ENCODE measurements at regions of chr12 and their contacts with region 1.

Region 1: GRCh38 chr12:95325501-95325900 is 107.9 kb downstream of the VEZT start:
- DNase-seq: no peak
- H3K4me3 ChIP-seq: no peak overlapping the region
- H3K27ac ChIP-seq: no peak overlapping the region
- H3K4me1 ChIP-seq: peaks cover 14% of the 10 kb centered on the region
- H3K27me3 ChIP-seq: no peaks in the 10 kb centered on the region
- CTCF ChIP-seq: no peak

Region 2: DNA sequence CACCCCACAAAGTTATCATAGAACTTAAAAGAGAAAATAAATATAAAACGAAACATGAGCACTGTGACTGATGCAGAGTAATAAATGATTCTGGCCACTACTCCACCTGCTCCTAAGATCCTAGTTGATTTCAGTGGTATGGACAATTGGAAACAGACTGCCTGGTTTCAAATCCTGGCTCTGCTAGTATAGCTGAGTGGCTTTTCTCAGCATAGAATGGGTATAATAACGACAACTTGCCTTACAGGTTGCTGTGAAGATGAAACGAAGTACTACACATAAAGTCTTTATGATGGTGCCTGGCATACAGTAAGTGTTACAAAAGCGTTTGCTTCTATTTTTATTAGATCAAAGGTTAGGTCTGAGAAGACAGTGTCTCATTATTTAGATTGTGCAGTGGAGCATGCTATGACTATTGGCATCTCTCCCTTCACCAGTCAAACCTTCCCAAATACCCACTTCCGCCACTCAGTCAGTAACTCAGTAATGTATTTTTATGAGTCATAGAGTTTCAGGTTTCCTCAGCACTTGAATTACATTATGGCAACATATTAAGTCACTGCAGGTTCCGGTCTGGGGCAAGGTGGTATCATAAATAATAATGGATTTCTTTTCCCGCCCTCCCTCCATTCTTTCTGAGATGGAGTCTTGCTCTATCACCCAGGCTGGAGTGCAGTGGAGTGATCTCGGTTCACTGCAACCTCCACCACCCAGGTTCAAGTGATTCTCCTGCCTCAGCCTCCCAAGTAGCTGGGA is 222.4 kb before region 1 on chr12:
- CTCF ChIA-PET with region 1: no interaction called
- POLR2A ChIA-PET with region 1: no interaction called
- intact Hi-C with region 1: no loop called
- DNase-seq: peak; percentile 87
- H3K4me3 ChIP-seq: no peak overlapping the region
- H3K27ac ChIP-seq: no peak overlapping the region
- H3K4me1 ChIP-seq: peaks cover 14% of the 10 kb centered on the region
- H3K27me3 ChIP-seq: no peaks in the 10 kb centered on the region
- CTCF ChIP-seq: no peak

Region 3: DNA sequence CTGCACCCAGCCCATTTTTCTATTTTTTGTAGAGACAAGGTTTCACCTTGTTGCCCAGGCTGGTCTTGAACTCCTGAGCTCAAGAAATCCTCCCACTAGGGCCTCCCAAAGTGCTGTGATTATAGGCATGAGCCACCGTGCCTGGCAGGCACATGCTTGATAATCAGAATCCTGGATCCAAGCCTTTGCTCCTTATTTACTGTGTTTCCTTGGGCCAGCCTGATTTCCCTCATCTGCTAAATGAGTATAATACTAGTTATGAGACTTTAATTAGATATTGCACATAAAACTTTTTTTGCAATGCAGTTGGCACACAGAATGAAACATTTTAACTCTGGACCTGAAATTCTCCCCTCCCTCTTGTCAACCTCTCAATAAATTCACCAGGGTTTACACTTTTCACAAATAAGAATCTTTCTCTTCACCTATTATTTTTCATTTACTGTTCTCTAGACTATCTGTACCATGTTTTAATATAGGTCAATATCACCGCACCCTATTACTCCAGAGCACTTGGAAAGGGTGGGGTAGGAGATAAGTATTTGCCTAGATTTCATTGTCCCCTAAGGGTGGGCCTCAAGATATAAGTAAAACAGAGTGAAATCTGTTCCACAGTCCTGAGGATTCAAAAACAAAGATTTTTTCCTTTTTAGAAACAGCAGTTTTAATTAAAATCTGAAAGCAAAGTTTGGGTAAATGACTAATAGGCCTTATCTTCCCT is 182.9 kb before region 1 on chr12:
- CTCF ChIA-PET with region 1: no interaction called
- POLR2A ChIA-PET with region 1: interaction called, 15 read pairs
- intact Hi-C with region 1: no loop called
- DNase-seq: no peak
- H3K4me3 ChIP-seq: no peak overlapping the region
- H3K27ac ChIP-seq: no peak overlapping the region
- H3K4me1 ChIP-seq: peaks cover 9% of the 10 kb centered on the region
- H3K27me3 ChIP-seq: no peaks in the 10 kb centered on the region
- CTCF ChIP-seq: no peak

Measured in A673 (cell line).